Dendritic cell treated with granulocyte-macrophage colony-stimulating factor and Interleukin-4, amounts not matched to agents 40 ng/mL and 50 ng/mL, for 4 days (primary cell): ENCODE measurements at regions of chr5 and their contacts with region 1.

Region 1: DNA sequence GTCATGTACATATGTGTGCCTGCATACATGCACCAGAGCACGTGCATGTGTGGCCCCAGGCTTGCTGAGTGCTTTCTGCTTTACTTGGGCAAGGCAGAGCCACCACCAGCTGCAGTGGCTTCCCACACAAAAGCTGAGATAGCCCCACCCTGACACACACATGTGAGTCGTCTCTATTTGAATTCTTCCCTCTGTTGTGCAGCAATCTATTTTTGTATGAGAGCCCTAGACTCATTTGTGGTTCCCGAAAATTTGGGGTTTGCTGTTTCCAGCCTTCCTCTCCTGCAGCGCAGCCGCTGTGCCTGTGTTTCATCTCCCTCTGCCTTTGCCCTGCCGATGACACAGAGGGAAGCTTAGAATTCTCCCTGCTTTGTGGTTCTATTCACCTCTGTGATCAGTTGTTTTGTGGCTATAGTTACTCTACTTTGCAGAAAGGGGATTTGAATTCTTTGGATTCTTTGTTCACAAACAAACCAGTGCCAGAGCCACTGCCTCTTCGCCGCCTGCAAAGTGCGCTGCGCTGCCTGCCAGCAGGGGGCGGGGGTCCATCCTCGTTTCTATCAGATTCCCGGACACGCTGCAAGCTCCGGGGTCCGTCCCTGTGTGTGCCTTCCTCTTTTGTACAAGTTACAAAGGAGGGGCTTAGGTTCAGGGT is 95.8 kb upstream of the DAP start:
- H3K4me3 Mint-ChIP-seq: peak overlapping the region; percentile 50
- H3K27ac Mint-ChIP-seq: peak overlapping the region; percentile 76
- H3K4me1 Mint-ChIP-seq: peaks cover 73% of the 10 kb centered on the region
- H3K27me3 Mint-ChIP-seq: peaks cover 25% of the 10 kb centered on the region

Region 2: DNA sequence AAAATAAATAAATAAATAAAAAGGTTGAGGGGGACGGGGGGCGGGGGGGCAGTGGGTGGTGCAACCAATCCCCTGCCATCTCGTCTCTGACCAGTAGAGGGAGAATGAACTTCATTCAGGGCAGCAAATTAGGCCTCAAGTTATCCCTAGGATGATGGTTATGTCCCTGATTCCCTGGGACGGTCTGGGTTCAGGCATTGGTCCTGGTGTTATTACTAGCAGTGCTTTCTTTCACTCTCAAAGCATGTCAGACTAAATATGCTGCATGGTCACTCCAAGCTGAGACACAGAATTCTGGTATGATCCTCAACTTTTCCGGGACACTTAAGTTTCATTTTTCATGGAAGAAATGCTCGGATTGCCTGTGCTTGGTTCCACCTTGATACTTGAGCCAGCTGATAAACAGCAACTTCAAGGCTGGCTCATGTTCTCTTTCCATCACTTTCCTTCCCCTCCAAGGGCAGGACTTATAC is 155.2 kb before region 1 on chr5:
- intact Hi-C with region 1: loop called (anchors 5 kb)
- H3K4me3 Mint-ChIP-seq: no peak overlapping the region
- H3K27ac Mint-ChIP-seq: no peak overlapping the region
- H3K4me1 Mint-ChIP-seq: peaks cover 54% of the 10 kb centered on the region
- H3K27me3 Mint-ChIP-seq: no peaks in the 10 kb centered on the region

Region 3: GRCh38 chr5:10812218-10812617 is 44.6 kb before region 1 on chr5:
- intact Hi-C with region 1: loop called (anchors 5 kb)
- H3K4me3 Mint-ChIP-seq: no peak overlapping the region
- H3K27ac Mint-ChIP-seq: no peak overlapping the region
- H3K4me1 Mint-ChIP-seq: peaks cover 28% of the 10 kb centered on the region
- H3K27me3 Mint-ChIP-seq: peaks cover 4% of the 10 kb centered on the region

Region 4: GRCh38 chr5:10921160-10921559 is 64.3 kb after region 1 on chr5:
- intact Hi-C with region 1: no loop called
- H3K4me3 Mint-ChIP-seq: no peak overlapping the region
- H3K27ac Mint-ChIP-seq: no peak overlapping the region
- H3K4me1 Mint-ChIP-seq: no peaks in the 10 kb centered on the region
- H3K27me3 Mint-ChIP-seq: peaks cover 4% of the 10 kb centered on the region